B cell (primary cell): ENCODE measurements at regions of chr3 and their contacts with region 1.

Region 1: GRCh38 chr3:114418724-114419543 is 125.1 kb downstream of the TIGIT start:
- DNase-seq: peak; percentile 78
- ATAC-seq: peak; percentile 91
- H3K4me3 ChIP-seq: no peak overlapping the region
- H3K4me3 Mint-ChIP-seq: no peak overlapping the region
- H3K27ac ChIP-seq: no peak overlapping the region
- H3K27ac Mint-ChIP-seq: no peak overlapping the region
- H3K4me1 ChIP-seq: peaks cover 0 to 6% of the 10 kb centered on the region in 2 donors
- H3K4me1 Mint-ChIP-seq: peaks cover 32% of the 10 kb centered on the region
- H3K27me3 ChIP-seq: no peaks in the 10 kb centered on the region
- H3K27me3 Mint-ChIP-seq: no peaks in the 10 kb centered on the region
- CTCF ChIP-seq: peak; percentile 85

Region 2: GRCh38 chr3:113736548-113737089 is 682.3 kb before region 1 on chr3:
- CTCF ChIA-PET with region 1: interaction called, 5 read pairs
- POLR2A ChIA-PET with region 1: no interaction called
- intact Hi-C with region 1: loop called (anchors 2 kb)
- DNase-seq: peak; percentile 80
- ATAC-seq: peak; percentile 85
- H3K4me3 ChIP-seq: no peak overlapping the region
- H3K4me3 Mint-ChIP-seq: no peak overlapping the region
- H3K27ac ChIP-seq: peak overlapping the region in 1 of 2 donors; percentile 32
- H3K27ac Mint-ChIP-seq: peak overlapping the region; percentile 68
- H3K4me1 ChIP-seq: peaks cover 7 to 8% of the 10 kb centered on the region in 2 donors
- H3K4me1 Mint-ChIP-seq: peaks cover 44% of the 10 kb centered on the region
- H3K27me3 ChIP-seq: no peaks in the 10 kb centered on the region
- H3K27me3 Mint-ChIP-seq: no peaks in the 10 kb centered on the region
- CTCF ChIP-seq: peak; percentile 80

Region 3: DNA sequence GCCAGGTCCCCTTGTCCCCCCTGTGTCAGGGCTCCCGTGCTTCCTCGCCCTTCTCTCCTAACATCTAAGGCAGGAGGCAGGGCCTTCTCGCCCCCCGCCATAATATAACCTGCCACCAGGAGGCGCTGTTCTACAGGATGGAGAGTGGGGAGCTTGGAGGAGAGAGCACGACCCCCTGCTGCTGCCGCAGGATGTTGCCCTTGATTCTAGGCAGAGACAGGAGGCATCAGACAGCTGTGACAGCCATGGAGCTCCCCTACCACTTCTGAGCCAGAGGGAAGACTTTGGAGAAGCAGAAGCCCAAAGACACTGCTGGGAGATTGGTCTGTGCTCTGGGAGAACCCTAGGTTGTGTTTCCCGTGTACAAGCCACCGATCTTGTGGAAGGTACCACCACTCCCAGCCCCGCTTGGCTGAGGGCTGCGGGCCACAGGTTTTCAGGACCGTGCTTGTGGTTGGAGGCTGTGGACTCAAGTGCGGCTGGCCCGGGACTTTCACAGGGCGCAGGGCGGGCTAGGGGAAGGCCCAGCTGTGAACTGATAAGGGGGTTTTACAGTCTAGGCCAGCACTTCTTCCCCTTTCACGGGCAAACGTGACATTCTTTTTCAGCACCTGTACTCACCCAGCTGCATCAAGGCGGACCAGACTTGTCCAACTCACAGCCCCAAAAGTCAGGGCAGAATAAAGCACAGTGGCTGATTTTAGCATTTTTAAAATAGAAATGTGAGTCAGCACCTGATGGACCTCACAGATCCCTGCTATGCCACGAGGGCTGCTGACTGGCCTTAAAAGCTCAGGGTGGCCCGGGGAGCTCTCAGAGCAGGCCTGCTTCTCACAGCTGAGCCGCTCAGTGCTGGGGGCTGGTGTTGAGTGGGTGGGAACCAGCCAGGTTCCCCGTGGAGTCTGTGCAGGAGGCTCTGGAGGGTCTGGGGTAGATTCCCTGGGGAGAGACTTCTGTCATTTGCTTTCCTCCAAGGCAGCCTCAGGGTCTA is 127.7 kb before region 1 on chr3:
- CTCF ChIA-PET with region 1: interaction called, 38 read pairs
- POLR2A ChIA-PET with region 1: interaction called, 3 read pairs
- intact Hi-C with region 1: loop called (anchors 2 kb)
- DNase-seq: peak; percentile 94
- ATAC-seq: peak; percentile 86
- H3K4me3 ChIP-seq: peak overlapping the region in 2 of 5 experiments; percentile 33 to 40
- H3K4me3 Mint-ChIP-seq: peak overlapping the region; percentile 83
- H3K27ac ChIP-seq: peak overlapping the region; percentile 93
- H3K27ac Mint-ChIP-seq: peak overlapping the region; percentile 97
- H3K4me1 ChIP-seq: peaks cover 13 to 18% of the 10 kb centered on the region in 2 donors
- H3K4me1 Mint-ChIP-seq: peaks cover 30% of the 10 kb centered on the region
- H3K27me3 ChIP-seq: no peaks in the 10 kb centered on the region
- H3K27me3 Mint-ChIP-seq: no peaks in the 10 kb centered on the region
- CTCF ChIP-seq: peak; percentile 92

Region 4: DNA sequence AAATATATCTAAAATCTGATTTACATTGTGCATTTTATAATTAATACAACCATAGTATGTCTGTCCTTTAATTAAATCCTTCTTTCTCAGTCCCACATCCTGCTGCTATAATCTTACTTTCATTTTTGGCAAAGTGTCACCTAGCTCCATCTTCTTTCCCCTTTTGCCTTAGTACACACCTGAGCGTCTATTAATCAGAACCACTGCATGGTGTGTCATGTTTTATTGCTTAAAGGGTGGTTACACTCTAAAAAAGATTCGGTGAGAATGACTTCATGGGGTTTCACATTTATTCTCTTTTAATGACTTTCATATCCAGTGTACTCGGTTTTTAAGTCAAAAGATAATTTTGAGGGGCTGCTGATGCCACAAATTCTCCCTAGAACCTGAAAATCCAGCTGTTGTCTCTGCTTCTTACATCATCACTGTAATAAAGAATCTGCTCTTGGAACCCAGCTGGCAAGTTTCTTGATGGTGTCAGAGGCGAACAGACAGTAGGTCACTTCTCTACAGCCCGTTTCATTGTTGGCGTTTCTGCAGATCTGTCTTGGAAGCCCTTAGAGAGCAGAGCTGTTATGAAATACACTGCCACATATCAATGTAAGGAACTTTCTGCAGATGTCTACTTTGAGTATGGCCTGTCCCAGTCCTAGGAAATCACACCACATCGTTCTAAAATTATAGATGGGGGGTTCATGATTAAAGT is 25.4 kb before region 1 on chr3:
- CTCF ChIA-PET with region 1: interaction called, 29 read pairs
- POLR2A ChIA-PET with region 1: no interaction called
- intact Hi-C with region 1: no loop called
- DNase-seq: no peak
- ATAC-seq: no peak
- H3K4me3 ChIP-seq: no peak overlapping the region
- H3K4me3 Mint-ChIP-seq: no peak overlapping the region
- H3K27ac ChIP-seq: no peak overlapping the region
- H3K27ac Mint-ChIP-seq: no peak overlapping the region
- H3K4me1 ChIP-seq: no peaks in the 10 kb centered on the region
- H3K4me1 Mint-ChIP-seq: peaks cover 12% of the 10 kb centered on the region
- H3K27me3 ChIP-seq: no peaks in the 10 kb centered on the region
- H3K27me3 Mint-ChIP-seq: no peaks in the 10 kb centered on the region
- CTCF ChIP-seq: no peak

Region 5: DNA sequence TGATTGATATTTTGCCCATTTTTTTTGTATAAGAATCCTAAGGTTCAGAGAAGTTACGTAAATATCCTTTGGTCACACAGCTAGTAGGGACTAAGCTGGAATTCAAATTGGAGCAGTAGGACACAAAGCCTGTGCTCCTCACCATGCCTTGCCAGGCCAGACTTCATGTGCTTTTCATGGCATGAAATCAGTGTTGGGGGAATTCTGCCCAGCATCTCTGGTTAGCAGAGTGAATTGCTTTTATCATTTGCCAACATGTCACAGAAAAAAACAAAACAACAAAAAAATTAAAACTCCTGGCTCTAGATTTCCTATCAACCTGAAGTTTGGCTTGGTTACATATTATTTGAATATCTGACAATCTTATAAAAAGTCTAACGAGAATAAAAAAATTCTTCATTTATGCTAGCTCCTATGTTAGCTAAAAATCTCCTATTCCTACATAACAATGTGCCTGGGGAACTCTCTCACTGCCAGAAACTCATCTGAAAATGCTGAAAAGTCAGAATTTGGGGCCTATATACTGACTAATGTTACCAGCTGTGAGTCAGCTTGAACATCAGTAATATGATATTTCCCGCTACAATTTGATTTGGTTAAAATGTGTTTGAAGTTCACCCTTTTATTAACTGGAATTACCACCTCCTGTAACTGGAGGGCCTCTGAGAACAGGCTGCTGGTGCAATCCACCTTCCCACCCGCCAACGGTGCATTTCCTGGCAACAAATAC is 16.6 kb after region 1 on chr3:
- CTCF ChIA-PET with region 1: interaction called, 203 read pairs
- POLR2A ChIA-PET with region 1: no interaction called
- intact Hi-C with region 1: no loop called
- DNase-seq: no peak
- ATAC-seq: no peak
- H3K4me3 ChIP-seq: no peak overlapping the region
- H3K4me3 Mint-ChIP-seq: no peak overlapping the region
- H3K27ac ChIP-seq: no peak overlapping the region
- H3K27ac Mint-ChIP-seq: no peak overlapping the region
- H3K4me1 ChIP-seq: peaks cover 13 to 15% of the 10 kb centered on the region in 2 donors
- H3K4me1 Mint-ChIP-seq: peaks cover 61% of the 10 kb centered on the region
- H3K27me3 ChIP-seq: no peaks in the 10 kb centered on the region
- H3K27me3 Mint-ChIP-seq: no peaks in the 10 kb centered on the region
- CTCF ChIP-seq: no peak

Region 6: DNA sequence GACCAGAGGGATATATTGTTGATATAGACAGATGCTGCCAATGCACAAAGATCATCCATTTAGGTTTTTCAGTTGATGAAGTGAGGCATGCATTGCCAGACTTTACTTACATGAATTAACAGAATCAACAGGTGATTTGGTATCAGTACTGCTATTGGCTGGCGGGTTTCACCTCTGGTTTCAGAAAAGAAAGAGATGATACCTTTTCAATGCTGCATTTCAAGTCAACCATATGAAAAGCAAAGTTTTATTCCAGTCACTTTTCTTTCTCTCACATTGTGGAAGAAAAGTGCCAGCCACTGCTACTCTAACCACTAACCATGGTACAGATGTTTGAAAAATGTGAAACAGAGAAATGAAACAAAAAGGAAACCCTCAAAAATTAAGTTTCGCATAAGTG is 164.0 kb after region 1 on chr3:
- CTCF ChIA-PET with region 1: interaction called, 10 read pairs
- POLR2A ChIA-PET with region 1: no interaction called
- intact Hi-C with region 1: no loop called
- DNase-seq: peak; percentile 13
- ATAC-seq: no peak
- H3K4me3 ChIP-seq: no peak overlapping the region
- H3K4me3 Mint-ChIP-seq: peak overlapping the region; percentile 10
- H3K27ac ChIP-seq: no peak overlapping the region
- H3K27ac Mint-ChIP-seq: peak overlapping the region; percentile 46
- H3K4me1 ChIP-seq: no peaks in the 10 kb centered on the region
- H3K4me1 Mint-ChIP-seq: peaks cover 29% of the 10 kb centered on the region
- H3K27me3 ChIP-seq: no peaks in the 10 kb centered on the region
- H3K27me3 Mint-ChIP-seq: no peaks in the 10 kb centered on the region
- CTCF ChIP-seq: no peak